Colonic mucosa (tissue), 4 donors: ENCODE measurements at regions of chr4 and their contacts with region 1.

Region 1: GRCh38 chr4:125314676-125315575 is at the start of gene FAT4:
- DNase-seq: peak; percentile 77
- H3K4me3 ChIP-seq: peak within 1 kb of the TSS; percentile 62
- H3K27ac ChIP-seq: peak within 1 kb of the TSS; percentile 73
- H3K4me1 ChIP-seq: no peaks in the 10 kb centered on the region
- H3K27me3 ChIP-seq: peaks cover 14% of the 10 kb centered on the region
- CTCF ChIP-seq: no peak
- total RNA-seq, gene FAT4: 1.5 to 4.3 TPM

Region 2: GRCh38 chr4:125735102-125735501 is 420.2 kb after region 1 on chr4:
- intact Hi-C with region 1: loop called (anchors 5 kb)
- DNase-seq: no peak
- H3K4me3 ChIP-seq: no peak overlapping the region
- H3K27ac ChIP-seq: no peak overlapping the region
- H3K4me1 ChIP-seq: no peaks in the 10 kb centered on the region
- H3K27me3 ChIP-seq: no peaks in the 10 kb centered on the region
- CTCF ChIP-seq: no peak

Region 3: GRCh38 chr4:126604268-126604867 is 1289.4 kb after region 1 on chr4:
- intact Hi-C with region 1: loop called (anchors 10 kb)
- DNase-seq: no peak
- H3K4me3 ChIP-seq: no peak overlapping the region
- H3K27ac ChIP-seq: no peak overlapping the region
- H3K4me1 ChIP-seq: no peaks in the 10 kb centered on the region
- H3K27me3 ChIP-seq: no peaks in the 10 kb centered on the region
- CTCF ChIP-seq: peak; percentile 33